Astrocyte of the spinal cord (primary cell): ENCODE measurements at regions of chr3 and their contacts with region 1.

Region 1: DNA sequence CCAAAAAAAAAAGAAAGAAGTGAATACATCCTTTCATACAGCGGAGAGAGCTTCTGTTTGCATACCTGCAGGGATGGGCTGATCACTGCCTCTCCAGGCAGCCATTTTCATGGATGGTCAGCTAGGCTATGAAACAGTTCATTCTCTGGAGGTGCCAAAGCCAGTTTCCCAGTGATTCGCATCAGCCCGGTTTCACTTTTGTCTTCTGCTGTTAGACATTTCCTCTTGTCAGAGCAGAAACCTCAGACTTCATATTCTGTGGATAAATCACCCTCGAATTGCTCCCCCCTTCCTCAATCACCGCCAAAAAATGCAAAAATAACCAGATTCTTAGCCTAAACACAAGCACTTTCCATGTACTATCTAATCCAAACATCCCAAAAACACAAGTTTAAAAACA is 225.6 kb downstream of the ADAMTS9 start:
- DNase-seq: peak; percentile 93
- H3K4me3 ChIP-seq: peak overlapping the region; percentile 14
- CTCF ChIP-seq: no peak

Region 2: GRCh38 chr3:63886858-63887257 is 575.3 kb before region 1 on chr3:
- in situ Hi-C with region 1: no loop called
- DNase-seq: no peak
- H3K4me3 ChIP-seq: no peak overlapping the region
- CTCF ChIP-seq: no peak

Region 3: DNA sequence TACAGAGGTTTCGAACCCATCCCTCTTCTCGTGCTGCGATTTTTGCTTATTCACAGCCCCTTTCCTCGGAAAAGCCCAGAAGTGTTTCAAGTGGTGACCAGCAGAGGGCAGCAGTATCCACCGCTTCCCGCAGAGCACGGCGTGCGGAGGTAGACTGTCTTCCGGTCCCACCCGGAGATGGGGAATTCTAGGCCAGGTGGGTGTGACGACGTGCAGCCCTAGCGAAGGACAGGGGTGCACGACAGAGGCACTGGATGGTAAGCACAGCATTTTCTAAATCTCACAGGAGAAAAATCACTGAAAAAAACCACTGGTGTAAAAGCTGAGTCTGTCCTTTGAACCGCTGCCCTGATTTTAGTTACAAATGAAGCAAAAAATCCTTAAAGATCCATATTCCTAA is 431.5 kb before region 1 on chr3:
- in situ Hi-C with region 1: loop called (anchors 25 kb)
- DNase-seq: peak; percentile 54
- H3K4me3 ChIP-seq: peak overlapping the region; percentile 28
- CTCF ChIP-seq: peak; percentile 76

Region 4: DNA sequence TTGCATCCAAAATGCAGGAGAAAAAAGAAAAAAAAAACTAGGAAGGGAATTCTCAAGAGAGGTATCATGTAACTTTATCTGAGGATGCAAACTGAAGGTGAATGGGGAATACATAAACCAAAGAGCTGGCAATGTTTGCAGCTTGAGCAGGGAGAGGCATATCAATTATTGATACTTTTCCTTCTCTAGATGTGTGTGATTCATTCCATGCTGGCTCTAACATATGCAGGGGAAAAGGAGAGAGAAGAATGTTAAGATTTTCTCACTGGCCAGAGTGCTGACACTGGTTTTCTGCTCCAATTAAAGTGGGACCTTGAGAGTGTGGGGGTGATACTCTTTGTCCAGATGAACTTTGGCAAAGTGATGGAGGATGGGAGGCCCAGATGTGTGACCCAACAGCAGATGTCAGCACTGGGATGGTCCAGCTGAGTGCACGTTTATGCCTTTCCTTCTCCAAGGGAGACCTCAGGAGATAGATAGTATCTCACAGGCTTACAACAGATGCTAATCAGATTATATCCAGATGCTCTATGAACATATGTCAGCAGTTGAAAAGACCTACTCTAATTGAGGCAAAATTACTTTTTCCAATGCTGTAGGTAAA is 388.9 kb before region 1 on chr3:
- in situ Hi-C with region 1: no loop called
- DNase-seq: no peak
- H3K4me3 ChIP-seq: no peak overlapping the region
- CTCF ChIP-seq: no peak

Region 5: DNA sequence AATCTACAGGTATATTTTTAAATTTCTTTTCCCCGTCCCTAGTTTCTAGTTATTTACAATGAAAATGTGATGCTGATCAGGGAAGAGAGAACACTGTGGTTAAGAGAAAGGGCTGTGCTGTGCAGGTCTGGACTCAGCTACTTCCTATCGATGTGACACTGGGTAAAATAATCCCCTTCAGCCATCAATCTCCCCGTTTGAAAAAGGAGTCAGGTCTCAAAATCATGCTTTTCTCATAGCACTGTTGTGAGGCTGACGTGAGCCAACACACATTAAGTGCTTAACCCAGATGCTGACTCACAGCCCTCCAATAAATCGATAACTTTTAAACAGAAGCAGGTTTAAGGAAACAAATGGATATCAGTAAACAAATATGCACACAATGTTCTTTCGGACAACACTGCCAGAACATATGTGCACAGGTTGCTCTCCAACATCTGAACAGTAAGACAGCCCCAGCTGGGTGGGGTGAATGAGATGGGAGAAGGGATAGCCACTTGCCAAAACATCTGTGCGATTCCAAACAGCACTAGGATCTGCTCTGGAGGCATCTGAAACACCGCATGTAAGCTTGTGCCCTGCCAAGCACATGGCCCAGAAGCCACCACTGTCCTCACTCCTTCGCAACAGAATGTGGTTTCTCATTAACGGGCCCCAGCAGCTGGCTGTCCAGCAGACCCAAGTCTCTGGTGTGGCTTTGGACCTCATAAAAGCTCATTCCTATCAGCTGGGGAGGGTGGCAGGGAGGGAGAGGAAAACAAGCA is 93.8 kb before region 1 on chr3:
- in situ Hi-C with region 1: no loop called
- DNase-seq: no peak
- H3K4me3 ChIP-seq: no peak overlapping the region
- CTCF ChIP-seq: no peak

Region 6: GRCh38 chr3:64890006-64890405 is 427.8 kb after region 1 on chr3:
- in situ Hi-C with region 1: no loop called
- DNase-seq: no peak
- H3K4me3 ChIP-seq: no peak overlapping the region
- CTCF ChIP-seq: no peak